Activated T-helper 1 cell treated with anti-CD3 and anti-CD28 coated beads, Interleukin-12 subunit alpha, Interleukin-12 subunit beta, Interleukin-2, Interleukin-4 antibody, amounts not matched to agents 30 ng/mL and 10 ng/mL and 1 ng/mL, durations not matched to agents 14 hours and 24 hours and 36 hours (primary cell): ENCODE measurements at regions of chr9 and their contacts with region 1.

Region 1: DNA sequence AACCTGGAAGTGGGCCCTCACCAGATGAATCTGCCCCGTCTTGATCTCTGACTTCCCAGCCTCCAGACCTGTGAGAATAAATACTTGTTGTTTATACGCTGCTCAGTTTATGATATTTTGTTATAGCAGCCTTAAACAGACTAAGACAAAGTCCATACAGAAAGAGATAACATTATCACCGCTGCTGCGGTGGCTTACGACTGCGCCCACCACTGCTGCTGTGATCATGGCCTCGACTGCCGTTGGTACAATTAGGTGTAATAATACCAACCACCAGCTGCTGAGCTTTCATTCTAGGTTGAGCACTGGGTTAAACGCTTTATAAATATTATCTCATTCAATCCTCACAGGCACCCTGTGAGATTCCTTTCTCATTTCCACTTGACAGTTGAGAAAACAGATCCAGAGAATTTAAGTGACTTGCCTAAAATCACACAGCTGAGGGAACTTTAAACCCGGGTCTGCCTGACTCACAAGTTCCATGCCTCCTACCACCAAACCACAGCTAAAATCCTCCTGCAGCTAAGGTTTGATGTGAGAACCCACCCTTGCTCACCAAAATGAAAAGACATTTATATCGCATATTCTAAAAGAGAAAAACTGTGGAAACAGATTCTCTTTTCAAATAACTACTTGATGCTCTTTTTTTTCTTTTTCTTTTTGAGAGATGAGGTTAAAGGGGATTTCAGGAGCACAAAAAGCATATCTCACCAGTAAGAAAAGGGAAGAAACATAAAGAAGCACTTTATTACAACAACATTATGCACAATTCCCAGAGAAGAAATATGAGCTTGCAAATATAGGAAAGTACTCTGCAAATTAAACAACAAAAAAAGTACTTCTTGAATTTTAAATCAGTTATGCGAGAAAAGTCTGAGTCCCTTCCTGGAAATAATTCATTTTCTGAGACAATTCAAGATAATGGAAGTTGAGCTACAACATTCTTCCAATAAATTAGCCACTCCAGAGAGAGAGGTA is 23.9 kb downstream of the GOLM1 start:
- DNase-seq: no peak
- H3K4me3 Mint-ChIP-seq: no peak overlapping the region
- H3K27ac Mint-ChIP-seq: peak overlapping the region; percentile 55
- H3K4me1 Mint-ChIP-seq: peaks cover 15% of the 10 kb centered on the region
- H3K27me3 Mint-ChIP-seq: no peaks in the 10 kb centered on the region

Region 2: DNA sequence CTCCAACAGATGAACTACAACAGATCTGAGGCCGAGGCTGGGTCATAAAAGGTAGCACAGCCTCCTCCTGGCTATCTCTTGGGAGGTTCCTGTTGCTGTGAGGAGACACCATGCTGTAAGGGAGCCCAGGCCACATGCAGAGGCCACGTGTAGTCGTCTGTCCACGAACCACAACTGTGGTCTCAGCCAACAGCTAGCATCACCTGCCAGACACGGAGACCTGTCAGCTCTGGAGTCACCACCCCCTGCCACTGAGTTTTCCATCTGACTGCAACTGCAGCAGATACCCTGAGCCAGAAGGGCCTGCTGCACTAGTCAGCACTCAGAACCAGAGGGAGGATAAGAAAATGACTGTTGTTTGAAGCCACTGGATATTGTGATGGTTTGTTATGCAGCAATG is 36.6 kb after region 1 on chr9:
- intact Hi-C with region 1: loop called (anchors 2 kb)
- DNase-seq: no peak
- H3K4me3 Mint-ChIP-seq: no peak overlapping the region
- H3K27ac Mint-ChIP-seq: no peak overlapping the region
- H3K4me1 Mint-ChIP-seq: peaks cover 2% of the 10 kb centered on the region
- H3K27me3 Mint-ChIP-seq: peaks cover 8% of the 10 kb centered on the region